Common myeloid progenitor, CD34-positive (primary cell): ENCODE measurements at regions of chr1 and their contacts with region 1.

Region 1: GRCh38 chr1:49995734-49996133 is 28.0 kb downstream of the AGBL4 start:
- DNase-seq: no peak
- H3K4me3 ChIP-seq: no peak overlapping the region
- H3K27ac ChIP-seq: no peak overlapping the region
- H3K4me1 ChIP-seq: no peaks in the 10 kb centered on the region
- H3K27me3 ChIP-seq: peaks cover 0 to 2% (median 0%) of the 10 kb centered on the region in 5 experiments

Region 2: GRCh38 chr1:49389699-49390098 is 606.0 kb before region 1 on chr1:
- CTCF ChIA-PET with region 1: no interaction called
- POLR2A ChIA-PET with region 1: no interaction called
- DNase-seq: no peak
- H3K4me3 ChIP-seq: no peak overlapping the region
- H3K27ac ChIP-seq: no peak overlapping the region
- H3K4me1 ChIP-seq: no peaks in the 10 kb centered on the region
- H3K27me3 ChIP-seq: peaks cover 0 to 2% (median 0%) of the 10 kb centered on the region in 5 experiments

Region 3: GRCh38 chr1:49841767-49842166 is 154.0 kb before region 1 on chr1:
- CTCF ChIA-PET with region 1: no interaction called
- POLR2A ChIA-PET with region 1: no interaction called
- DNase-seq: no peak
- H3K4me3 ChIP-seq: no peak overlapping the region
- H3K27ac ChIP-seq: no peak overlapping the region
- H3K4me1 ChIP-seq: no peaks in the 10 kb centered on the region
- H3K27me3 ChIP-seq: no peaks in the 10 kb centered on the region

Region 4: GRCh38 chr1:50023332-50024159 is 27.8 kb after region 1 on chr1 and contains the start of gene AGBL4:
- CTCF ChIA-PET with region 1: no interaction called
- POLR2A ChIA-PET with region 1: no interaction called
- DNase-seq: peak; percentile 36 to 53 (median 41)
- H3K4me3 ChIP-seq: peak within 1 kb of the TSS; percentile 35 to 79 (median 57)
- H3K27ac ChIP-seq: no peak within 1 kb of the TSS
- H3K4me1 ChIP-seq: peaks cover 0 to 12% (median 8%) of the 10 kb centered on the region in 4 experiments
- H3K27me3 ChIP-seq: peaks cover 0 to 30% (median 17%) of the 10 kb centered on the region in 5 experiments

Region 5: DNA sequence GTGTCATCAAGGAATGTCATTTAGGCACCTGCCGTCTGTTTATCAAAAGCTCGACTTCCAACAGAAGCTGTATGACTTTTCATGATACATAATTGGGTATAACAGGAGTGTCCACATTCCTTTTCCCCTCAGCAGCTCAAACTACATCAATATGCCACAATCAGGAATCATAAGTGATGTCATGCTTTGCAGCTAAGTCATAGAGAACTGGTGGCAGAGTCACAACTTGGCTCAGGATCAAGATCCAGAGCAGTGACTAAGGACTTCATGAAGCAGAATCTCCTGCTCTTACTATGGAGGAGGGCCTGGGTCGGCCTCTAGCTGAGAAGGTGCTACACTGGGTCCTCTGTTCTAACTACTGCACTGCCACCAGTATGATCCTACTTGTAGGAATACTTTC is 64.5 kb after region 1 on chr1:
- CTCF ChIA-PET with region 1: no interaction called
- POLR2A ChIA-PET with region 1: interaction called, 13 read pairs
- DNase-seq: peak in 2 of 3 donors; percentile 23 to 27
- H3K4me3 ChIP-seq: no peak overlapping the region
- H3K27ac ChIP-seq: no peak overlapping the region
- H3K4me1 ChIP-seq: no peaks in the 10 kb centered on the region
- H3K27me3 ChIP-seq: no peaks in the 10 kb centered on the region

Region 6: GRCh38 chr1:50097021-50097679 is 101.4 kb after region 1 on chr1:
- CTCF ChIA-PET with region 1: no interaction called
- POLR2A ChIA-PET with region 1: no interaction called
- DNase-seq: no peak
- H3K4me3 ChIP-seq: no peak overlapping the region
- H3K27ac ChIP-seq: no peak overlapping the region
- H3K4me1 ChIP-seq: peaks cover 0 to 5% (median 1%) of the 10 kb centered on the region in 4 experiments
- H3K27me3 ChIP-seq: no peaks in the 10 kb centered on the region